Transverse colon (tissue), 4 donors: ENCODE measurements at regions of chr1 and their contacts with region 1.

Region 1: DNA sequence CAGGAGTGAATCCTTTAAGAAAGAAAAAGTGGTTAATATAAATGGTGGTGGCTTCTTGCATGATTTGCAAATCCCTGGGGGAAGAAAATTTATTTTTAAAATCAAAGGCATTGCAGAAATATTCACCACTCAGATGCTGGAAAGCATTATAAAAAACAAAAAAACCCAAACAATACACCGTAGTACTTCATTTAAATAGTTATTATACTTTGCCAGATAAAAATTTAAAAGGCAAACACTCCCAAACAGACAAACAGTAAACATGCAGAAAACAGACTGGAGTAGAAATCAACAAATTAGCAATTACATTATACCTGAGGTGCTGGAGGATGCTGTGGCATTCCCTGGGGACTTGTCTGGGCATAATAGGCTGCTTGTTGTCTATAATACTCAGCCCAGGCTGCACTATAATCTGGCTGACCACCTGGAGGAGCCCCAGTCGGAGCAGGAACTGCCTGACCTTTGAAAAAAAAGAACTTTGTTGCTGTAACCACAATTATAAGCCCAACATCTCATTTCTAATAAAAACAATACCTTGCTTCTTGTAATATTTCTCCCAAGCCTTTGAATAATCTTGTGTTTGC is 29.9 kb downstream of the FUBP1 start:
- DNase-seq: no peak
- H3K4me3 ChIP-seq: no peak overlapping the region
- H3K27ac ChIP-seq: no peak overlapping the region
- H3K4me1 ChIP-seq: peaks cover 0 to 13% (median 0%) of the 10 kb centered on the region in 4 donors
- H3K27me3 ChIP-seq: no peaks in the 10 kb centered on the region
- CTCF ChIP-seq: peak in 1 of 5 experiments; percentile 3
- EP300 ChIP-seq: no peak
- POLR2A ChIP-seq: no peak

Region 2: DNA sequence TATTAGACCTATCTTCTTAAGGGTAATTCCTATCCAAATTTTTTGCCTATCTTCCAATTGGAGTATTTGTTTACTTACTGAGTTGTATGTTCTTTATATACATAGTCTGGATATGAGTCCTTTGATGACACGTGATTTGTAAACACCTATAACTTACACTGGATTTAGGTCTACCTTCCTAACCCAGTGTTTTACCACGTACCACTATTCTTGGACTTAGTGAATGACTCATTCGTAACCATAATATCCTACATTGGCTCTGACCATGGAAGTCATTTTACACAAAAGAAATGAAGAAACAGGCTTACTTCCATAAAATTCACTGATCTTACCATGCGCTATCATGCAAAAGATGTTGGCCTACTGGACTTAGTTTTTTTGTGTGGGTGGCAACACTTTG is 242.6 kb before region 1 on chr1:
- in situ Hi-C with region 1: loop called in 2 of 4 experiments (anchors 10 to 25 kb)
- intact Hi-C with region 1: no loop called
- DNase-seq: no peak
- H3K4me3 ChIP-seq: no peak overlapping the region
- H3K27ac ChIP-seq: no peak overlapping the region
- H3K4me1 ChIP-seq: no peaks in the 10 kb centered on the region
- H3K27me3 ChIP-seq: no peaks in the 10 kb centered on the region
- CTCF ChIP-seq: no peak
- EP300 ChIP-seq: no peak
- POLR2A ChIP-seq: no peak

Region 3: GRCh38 chr1:77718181-77718580 is 230.8 kb before region 1 on chr1:
- in situ Hi-C with region 1: loop called in 2 of 4 experiments (anchors 10 to 25 kb)
- intact Hi-C with region 1: no loop called
- DNase-seq: no peak
- H3K4me3 ChIP-seq: no peak overlapping the region
- H3K27ac ChIP-seq: no peak overlapping the region
- H3K4me1 ChIP-seq: no peaks in the 10 kb centered on the region
- H3K27me3 ChIP-seq: no peaks in the 10 kb centered on the region
- CTCF ChIP-seq: no peak
- EP300 ChIP-seq: no peak
- POLR2A ChIP-seq: no peak

Region 4: DNA sequence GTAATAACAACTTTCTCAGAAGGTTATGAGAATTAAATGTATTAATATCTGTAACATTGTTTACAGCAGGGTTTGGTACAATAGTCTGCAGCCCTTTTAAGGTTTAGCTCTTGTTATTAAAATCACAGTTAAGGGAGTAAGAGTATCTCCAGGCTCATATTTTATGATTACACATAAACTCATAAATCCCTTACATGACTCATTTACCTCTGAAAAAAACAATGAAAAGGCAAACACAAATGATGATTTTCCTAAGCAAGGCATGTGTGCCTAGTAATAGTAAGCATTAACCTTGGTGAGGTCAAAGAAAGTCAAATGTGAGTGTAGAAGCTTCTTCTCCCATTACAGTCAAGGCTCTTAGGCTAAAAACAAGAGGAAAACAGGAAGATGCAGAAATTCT is 1142.1 kb after region 1 on chr1:
- in situ Hi-C with region 1: no loop called
- intact Hi-C with region 1: no loop called
- DNase-seq: no peak
- H3K4me3 ChIP-seq: no peak overlapping the region
- H3K27ac ChIP-seq: no peak overlapping the region
- H3K4me1 ChIP-seq: no peaks in the 10 kb centered on the region
- H3K27me3 ChIP-seq: no peaks in the 10 kb centered on the region
- CTCF ChIP-seq: no peak
- EP300 ChIP-seq: no peak
- POLR2A ChIP-seq: no peak

Region 5: DNA sequence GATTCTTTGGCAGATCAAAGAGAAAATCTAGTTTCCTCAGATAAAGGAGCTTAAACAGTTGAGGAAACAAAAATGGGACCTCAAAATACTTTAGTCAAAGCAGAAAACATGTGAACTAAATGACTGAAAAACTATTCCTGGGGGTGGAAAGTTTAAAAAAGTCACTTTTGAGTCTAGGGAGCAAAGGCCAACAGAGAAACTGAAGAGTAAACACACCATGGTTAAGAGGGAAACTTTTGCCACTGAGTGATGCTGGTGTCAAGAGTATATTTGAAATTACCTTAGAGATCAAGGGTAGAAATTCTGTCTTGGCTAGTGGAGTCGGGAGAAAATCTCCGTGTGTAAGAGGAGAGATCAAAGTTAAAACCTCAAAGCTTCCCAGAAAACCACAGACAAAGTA is 1558.8 kb after region 1 on chr1:
- in situ Hi-C with region 1: no loop called
- intact Hi-C with region 1: no loop called
- DNase-seq: no peak
- H3K4me3 ChIP-seq: no peak overlapping the region
- H3K27ac ChIP-seq: no peak overlapping the region
- H3K4me1 ChIP-seq: no peaks in the 10 kb centered on the region
- H3K27me3 ChIP-seq: no peaks in the 10 kb centered on the region
- CTCF ChIP-seq: no peak
- EP300 ChIP-seq: no peak
- POLR2A ChIP-seq: no peak